AG04450 (cell line): ENCODE measurements at regions of chr19 and their contacts with region 1.

Region 1: DNA sequence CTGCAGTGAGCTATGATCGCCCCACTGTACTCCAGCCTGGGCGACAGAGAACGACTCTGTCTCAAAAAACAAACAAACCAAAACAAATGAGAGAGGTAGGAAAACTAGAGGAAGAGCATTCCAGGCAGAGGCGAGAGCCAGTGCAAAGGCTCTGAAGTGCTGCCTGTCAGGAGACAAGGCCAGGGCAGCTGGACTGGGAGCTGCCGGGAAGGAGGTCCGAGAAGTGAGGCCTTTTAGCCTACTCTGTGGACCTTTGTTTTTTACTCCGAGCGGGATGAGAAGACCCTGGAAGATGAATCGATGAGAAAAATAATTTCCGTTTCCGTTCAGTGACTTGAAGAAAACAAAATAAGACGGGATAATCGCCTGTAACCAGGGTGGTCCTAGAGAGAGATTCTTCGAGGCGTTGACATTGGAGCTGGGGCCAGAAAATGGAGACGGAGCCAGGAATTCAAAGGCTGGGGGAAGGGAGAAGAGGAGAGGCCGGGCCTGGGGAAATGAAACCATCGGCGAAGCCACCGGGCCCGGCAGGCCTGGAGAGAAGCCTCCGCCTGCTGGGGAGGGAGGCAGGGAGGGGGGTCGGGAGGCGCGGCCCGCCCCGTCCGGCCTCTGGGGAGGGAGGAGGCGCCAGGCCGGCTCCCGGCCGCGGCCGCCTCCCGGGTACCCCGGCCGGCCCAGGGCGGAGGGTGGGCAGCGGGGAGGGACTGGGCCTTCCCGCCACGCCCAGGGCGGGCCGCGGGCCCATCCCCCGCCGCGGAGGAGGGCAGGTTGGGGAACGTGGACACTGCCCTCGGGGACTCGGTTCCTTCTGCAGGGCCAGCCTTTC is 7.8 kb upstream of the SERTAD1 start:
- DNase-seq: peak; percentile 66
- H3K4me3 ChIP-seq: peak overlapping the region; percentile 57
- H3K27ac ChIP-seq: peak overlapping the region; percentile 94
- H3K27me3 ChIP-seq: no peaks in the 10 kb centered on the region
- CTCF ChIP-seq: no peak

Region 2: DNA sequence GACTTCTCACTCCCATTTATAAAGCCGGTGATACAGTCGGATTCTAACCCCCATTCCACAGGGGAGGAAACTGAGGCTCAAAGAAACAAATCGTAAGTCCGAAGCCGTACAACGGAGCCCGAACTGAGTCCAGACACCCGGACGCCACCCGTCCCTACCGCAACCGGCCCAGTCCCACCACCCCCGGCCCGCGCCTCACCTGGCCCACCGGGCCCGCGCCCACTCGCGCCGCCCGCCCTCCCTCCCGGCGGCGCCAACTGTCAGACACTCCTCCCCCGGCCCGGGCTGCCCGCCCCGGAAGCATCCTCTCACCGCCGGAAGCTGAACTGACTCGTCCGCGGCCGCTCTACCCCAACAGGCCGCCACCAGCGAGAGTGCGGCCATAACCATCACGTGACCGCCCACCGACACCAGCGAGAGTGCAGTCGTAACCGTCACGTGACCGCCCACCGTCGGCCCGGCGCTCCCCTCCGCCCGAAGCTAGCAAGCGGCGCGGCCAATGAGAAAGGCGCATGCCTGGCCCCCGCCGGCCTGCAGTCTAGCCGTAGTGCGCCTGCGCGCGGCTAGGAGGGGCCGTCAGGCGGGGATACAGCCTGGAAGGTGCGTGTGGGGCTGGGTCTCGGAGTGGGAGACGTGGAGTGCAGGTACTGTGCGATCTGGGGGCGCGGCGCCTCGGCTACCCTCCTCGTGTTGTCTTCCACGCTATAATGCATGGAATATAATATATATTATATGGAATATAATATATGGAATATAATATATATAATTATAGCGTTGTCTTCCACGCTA is 85.3 kb before region 1 on chr19 and contains the starts of genes C19orf47 and PLD3:
- CTCF ChIA-PET with region 1: no interaction called
- POLR2A ChIA-PET with region 1: no interaction called
- DNase-seq: peak; percentile 99
- H3K4me3 ChIP-seq: peak within 1 kb of the TSS; percentile 96
- H3K27ac ChIP-seq: peak within 1 kb of the TSS; percentile 3
- H3K27me3 ChIP-seq: no peaks in the 10 kb centered on the region
- CTCF ChIP-seq: no peak
- polyA plus RNA-seq, gene C19orf47: 15.9 and 16.9 TPM in 2 replicates
- polyA plus RNA-seq, gene PLD3: 395 and 559 TPM in 2 replicates

Region 3: GRCh38 chr19:40444192-40445028 is 10.8 kb after region 1 on chr19 and contains the start of gene SERTAD3:
- CTCF ChIA-PET with region 1: interaction called, 4 read pairs
- POLR2A ChIA-PET with region 1: interaction called, 21 read pairs
- DNase-seq: peak; percentile 82
- H3K4me3 ChIP-seq: peak within 1 kb of the TSS; percentile 100
- H3K27ac ChIP-seq: peak within 1 kb of the TSS; percentile 91
- H3K27me3 ChIP-seq: no peaks in the 10 kb centered on the region
- CTCF ChIP-seq: no peak
- polyA plus RNA-seq, gene SERTAD3: 16.1 and 19.6 TPM in 2 replicates